ENCODE measurements at regions of chr1 and their contacts with region 1.

Region 1: GRCh38 chr1:156927215-156928042 is 7.0 kb downstream of the LRRC71 start:
- DNase-seq: no peak

Region 2: DNA sequence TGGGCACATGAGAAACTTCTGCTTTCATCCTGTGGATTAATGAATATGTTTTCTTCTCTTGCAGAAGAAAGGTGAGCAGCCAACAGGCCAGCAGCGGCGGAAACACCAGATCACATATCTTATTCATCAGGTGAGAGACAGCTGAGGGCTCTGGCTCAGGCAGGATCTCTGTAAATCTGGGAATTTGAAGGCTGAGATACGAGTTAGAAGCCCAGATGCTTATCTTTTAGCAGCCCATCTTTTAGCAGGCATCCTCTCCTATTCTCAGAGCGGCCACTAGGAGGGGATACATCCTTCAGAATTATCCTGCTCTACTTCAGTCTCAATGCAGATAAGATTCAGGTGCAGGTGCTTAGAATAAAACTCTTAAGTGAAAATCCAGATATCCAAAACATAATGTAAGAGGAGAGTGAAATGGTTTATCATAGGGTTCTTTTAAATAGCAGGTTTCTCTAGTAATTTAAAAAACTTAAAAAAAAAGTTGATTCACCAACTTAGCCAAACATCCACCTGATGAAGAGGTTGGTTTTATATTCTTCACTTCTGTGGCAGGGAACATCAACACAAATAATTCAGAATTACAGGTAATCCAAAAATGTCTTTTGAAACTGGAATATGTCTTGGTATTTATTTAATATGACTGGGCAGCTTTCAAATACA is 130.1 kb before region 1 on chr1:
- intact Hi-C with region 1: loop called (anchors 2 kb)
- DNase-seq: no peak

Region 3: GRCh38 chr1:156838981-156839410 is 88.4 kb before region 1 on chr1:
- intact Hi-C with region 1: loop called (anchors 5 kb)
- DNase-seq: no peak

Measured in cardiac septum (tissue), 1 donor.